BJ (cell line): ENCODE measurements at regions of chr22 and their contacts with region 1.

Region 1: GRCh38 chr22:30289134-30289979 is at the start of gene CASTOR1:
- DNase-seq: peak; percentile 91
- H3K4me3 ChIP-seq: peak within 1 kb of the TSS; percentile 71
- H3K27me3 ChIP-seq: no peaks in the 10 kb centered on the region
- CTCF ChIP-seq: no peak
- polyA plus RNA-seq, gene CASTOR1: 7.7 and 16.4 TPM in 2 replicates

Region 2: DNA sequence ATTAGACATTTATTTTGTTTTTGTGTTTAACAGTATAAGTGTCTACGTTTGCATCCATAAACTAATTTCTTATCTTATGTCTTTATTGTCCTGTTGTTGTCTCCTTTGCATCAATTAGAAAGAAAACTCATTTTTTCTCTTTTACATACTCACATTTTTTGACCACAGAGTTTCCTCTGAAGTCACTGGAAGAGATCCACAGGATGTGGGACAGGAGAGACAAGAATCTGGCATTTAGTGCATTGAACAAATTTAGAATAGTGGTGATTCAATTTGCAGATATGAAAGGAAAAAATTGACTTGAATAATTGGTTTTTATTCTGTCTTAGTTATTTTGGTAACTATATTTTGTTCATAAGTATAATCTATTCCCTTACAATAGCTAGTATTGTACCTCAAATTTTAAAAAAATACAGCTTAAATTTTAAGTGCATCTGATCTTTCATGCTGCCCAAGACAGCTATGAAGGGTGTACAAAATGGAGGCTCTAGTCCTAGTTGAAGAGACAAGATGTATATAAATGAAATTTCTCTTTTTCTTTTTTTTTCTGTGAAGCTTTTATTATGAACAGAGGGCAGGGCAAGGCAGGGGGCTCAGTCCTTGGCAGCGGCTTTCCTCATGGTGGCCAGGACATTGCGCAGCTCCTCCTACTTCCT is 184.7 kb before region 1 on chr22:
- CTCF ChIA-PET with region 1: interaction called, 22 read pairs
- POLR2A ChIA-PET with region 1: no interaction called
- DNase-seq: no peak
- H3K4me3 ChIP-seq: no peak overlapping the region
- H3K27me3 ChIP-seq: no peaks in the 10 kb centered on the region
- CTCF ChIP-seq: no peak

Region 3: GRCh38 chr22:30212363-30212995 is 76.9 kb before region 1 on chr22:
- CTCF ChIA-PET with region 1: no interaction called
- POLR2A ChIA-PET with region 1: no interaction called
- DNase-seq: peak; percentile 75
- H3K4me3 ChIP-seq: no peak overlapping the region
- H3K27me3 ChIP-seq: no peaks in the 10 kb centered on the region
- CTCF ChIP-seq: no peak

Region 4: DNA sequence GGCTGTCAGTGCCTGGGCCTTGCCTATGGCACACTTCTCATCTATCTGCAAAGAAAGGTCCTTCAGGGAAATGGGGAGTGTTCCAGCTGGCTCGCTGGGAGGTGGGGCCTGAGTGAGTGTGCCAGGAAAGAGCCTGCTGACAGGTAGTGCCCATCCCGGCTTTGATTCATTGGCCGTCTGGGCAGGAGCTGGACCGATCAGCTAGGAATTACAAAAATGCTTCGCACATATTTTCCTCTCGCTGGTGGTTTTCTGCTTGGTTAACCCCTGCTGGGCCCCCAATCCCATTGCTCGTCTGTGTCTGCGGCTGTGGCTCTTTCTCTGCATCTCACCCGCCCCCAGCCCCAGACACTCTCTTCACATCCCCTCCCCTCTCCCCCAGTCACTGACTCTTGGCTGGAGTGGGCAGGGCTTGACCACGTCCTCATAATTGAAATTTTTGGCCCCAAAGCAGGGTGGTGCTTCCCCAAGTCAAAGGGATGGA is 53.6 kb before region 1 on chr22:
- CTCF ChIA-PET with region 1: no interaction called
- POLR2A ChIA-PET with region 1: no interaction called
- DNase-seq: peak; percentile 67
- H3K4me3 ChIP-seq: no peak overlapping the region
- H3K27me3 ChIP-seq: no peaks in the 10 kb centered on the region; the same call in 1 of the 2 replicates
- CTCF ChIP-seq: no peak

Region 5: DNA sequence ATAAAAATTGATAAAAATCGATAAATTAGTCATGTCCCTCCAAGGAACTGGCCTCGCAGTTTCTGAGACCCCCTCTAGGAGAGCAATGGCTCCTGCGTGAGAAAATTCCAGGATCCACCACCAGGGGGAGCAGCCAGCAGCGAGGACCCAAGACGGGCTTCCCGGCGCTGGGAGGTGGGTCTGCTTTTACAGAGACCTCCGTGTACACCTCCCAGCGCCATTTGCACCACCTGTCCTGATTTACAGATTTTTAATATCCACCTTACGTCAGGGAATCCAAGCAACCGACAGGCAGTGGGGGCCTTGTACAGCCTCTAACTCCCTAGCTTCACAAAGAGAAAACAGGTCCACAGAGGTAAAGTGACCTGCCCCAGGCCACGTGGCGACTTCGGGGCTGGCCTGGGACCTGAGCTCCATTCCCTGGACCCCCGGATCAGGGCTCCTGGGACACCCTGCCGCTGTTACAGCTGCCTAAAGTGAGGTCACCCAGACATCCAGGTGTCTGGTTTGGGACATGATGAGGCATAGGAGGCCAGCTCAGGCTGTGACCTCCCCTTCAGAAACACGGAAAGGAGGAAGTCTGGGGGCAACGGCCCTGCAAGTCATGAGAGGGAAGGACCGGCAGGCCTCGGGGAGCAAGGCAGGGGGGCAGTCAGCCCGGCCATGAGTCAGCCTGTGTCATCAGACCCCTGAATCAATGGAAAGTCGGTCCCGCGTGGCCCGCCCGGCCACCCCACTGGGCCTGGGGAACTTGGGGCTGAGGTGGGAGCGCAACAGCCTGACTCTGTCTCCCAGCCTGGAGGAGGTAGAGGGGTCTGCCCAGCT is 26.2 kb before region 1 on chr22:
- CTCF ChIA-PET with region 1: interaction called, 49 read pairs
- POLR2A ChIA-PET with region 1: no interaction called
- DNase-seq: no peak
- H3K4me3 ChIP-seq: no peak overlapping the region
- H3K27me3 ChIP-seq: no peaks in the 10 kb centered on the region; the same call in 1 of the 2 replicates
- CTCF ChIP-seq: peak; percentile 95

Region 6: DNA sequence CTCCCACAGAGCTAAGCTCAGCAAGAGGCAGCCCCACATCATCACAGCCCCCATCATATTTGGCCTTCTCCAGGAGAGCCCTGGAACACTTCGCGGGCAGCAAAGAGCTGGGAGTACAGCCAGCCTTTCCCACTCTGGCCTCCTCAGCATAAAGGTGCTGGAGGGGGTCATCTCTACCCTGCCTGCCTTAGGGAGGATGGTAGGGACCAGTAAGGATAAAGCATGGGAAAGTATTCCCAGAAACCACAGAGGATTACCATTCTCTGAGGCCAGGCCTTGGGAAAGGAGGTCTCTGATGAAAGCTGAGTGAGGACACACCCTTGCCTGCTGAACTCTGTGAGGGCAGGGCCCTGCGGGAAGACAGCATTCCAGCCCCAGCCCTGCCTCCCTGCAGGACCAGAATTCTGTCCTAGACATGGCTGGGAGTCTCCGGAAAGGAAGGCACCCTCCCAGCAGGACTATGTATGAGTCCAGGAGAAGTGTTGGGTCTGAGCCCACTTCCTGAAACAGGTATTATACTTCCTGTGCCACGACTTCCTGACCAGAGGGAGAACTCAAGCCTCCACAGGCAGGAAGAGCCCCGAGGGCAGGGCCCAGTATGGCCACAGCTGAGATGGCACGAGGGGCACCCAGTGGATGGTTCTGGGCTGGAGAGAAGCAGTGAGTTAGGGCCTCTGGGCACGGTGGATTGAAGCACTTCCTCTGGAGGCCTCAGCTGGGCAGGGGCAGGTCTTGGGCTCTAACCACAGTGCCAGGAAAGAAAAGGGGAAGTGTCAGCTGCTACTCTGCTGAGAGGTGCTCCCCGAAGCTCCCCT is 12.8 kb after region 1 on chr22:
- CTCF ChIA-PET with region 1: interaction called, 31 read pairs
- POLR2A ChIA-PET with region 1: no interaction called
- DNase-seq: peak; percentile 52
- H3K4me3 ChIP-seq: no peak overlapping the region
- H3K27me3 ChIP-seq: no peaks in the 10 kb centered on the region
- CTCF ChIP-seq: no peak

Region 7: GRCh38 chr22:30336752-30337460 is 47.5 kb after region 1 on chr22:
- CTCF ChIA-PET with region 1: interaction called, 11 read pairs
- POLR2A ChIA-PET with region 1: no interaction called
- DNase-seq: no peak
- H3K4me3 ChIP-seq: no peak overlapping the region
- H3K27me3 ChIP-seq: no peaks in the 10 kb centered on the region
- CTCF ChIP-seq: no peak

Region 8: GRCh38 chr22:30373331-30374325 is 84.3 kb after region 1 on chr22:
- CTCF ChIA-PET with region 1: interaction called, 204 read pairs
- POLR2A ChIA-PET with region 1: no interaction called
- DNase-seq: no peak
- H3K4me3 ChIP-seq: no peak overlapping the region
- H3K27me3 ChIP-seq: no peaks in the 10 kb centered on the region
- CTCF ChIP-seq: no peak

Region 9: GRCh38 chr22:30423982-30424963 is 134.9 kb after region 1 on chr22:
- CTCF ChIA-PET with region 1: interaction called, 37 read pairs
- POLR2A ChIA-PET with region 1: no interaction called
- DNase-seq: peak; percentile 96
- H3K4me3 ChIP-seq: peak overlapping the region; percentile 47
- H3K27me3 ChIP-seq: no peaks in the 10 kb centered on the region
- CTCF ChIP-seq: peak; percentile 32